Activated CD4-positive, alpha-beta T cell treated with anti-CD3 and anti-CD28 coated beads for 36 hours (primary cell): ENCODE measurements at regions of chr5 and their contacts with region 1.

Region 1: GRCh38 chr5:139210585-139210984 is 12.4 kb upstream of the SIL1 start:
- DNase-seq: no peak
- ATAC-seq: no peak
- H3K4me3 Mint-ChIP-seq: no peak overlapping the region
- H3K27ac Mint-ChIP-seq: no peak overlapping the region
- H3K4me1 Mint-ChIP-seq: peaks cover 5% of the 10 kb centered on the region
- H3K27me3 Mint-ChIP-seq: no peaks in the 10 kb centered on the region

Region 2: GRCh38 chr5:138528208-138528607 is 682.4 kb before region 1 on chr5:
- CTCF ChIA-PET with region 1: no interaction called
- POLR2A ChIA-PET with region 1: interaction called, 12 read pairs
- intact Hi-C with region 1: no loop called
- DNase-seq: no peak
- ATAC-seq: no peak
- H3K4me3 Mint-ChIP-seq: no peak overlapping the region
- H3K27ac Mint-ChIP-seq: peak overlapping the region; percentile 23
- H3K4me1 Mint-ChIP-seq: peaks cover 50% of the 10 kb centered on the region
- H3K27me3 Mint-ChIP-seq: no peaks in the 10 kb centered on the region

Region 3: DNA sequence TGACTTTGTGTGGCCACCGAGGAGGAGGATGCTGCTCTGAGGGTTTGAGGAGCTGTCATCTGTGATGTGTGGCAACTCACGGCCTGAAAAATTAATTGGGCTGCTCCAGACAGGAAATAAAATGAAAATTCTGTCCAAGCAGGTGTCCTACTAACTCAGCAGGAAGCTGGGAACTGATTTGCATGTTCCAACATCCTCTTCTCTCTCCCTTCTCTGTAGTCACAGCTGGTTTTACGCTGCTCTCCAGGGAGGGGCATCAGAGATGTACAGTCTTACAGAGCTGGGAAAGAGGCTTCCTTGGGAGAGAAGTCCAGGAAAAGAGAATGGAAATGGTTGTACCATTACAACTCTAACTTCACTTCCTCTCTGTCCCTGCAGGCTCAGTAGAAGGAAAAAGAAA is 11.8 kb after region 1 on chr5:
- CTCF ChIA-PET with region 1: no interaction called
- POLR2A ChIA-PET with region 1: no interaction called
- intact Hi-C with region 1: no loop called
- DNase-seq: no peak
- ATAC-seq: no peak
- H3K4me3 Mint-ChIP-seq: no peak overlapping the region
- H3K27ac Mint-ChIP-seq: no peak overlapping the region
- H3K4me1 Mint-ChIP-seq: no peaks in the 10 kb centered on the region
- H3K27me3 Mint-ChIP-seq: peaks cover 2% of the 10 kb centered on the region